Ascending aorta (tissue), 2 donors: ENCODE measurements at regions of chr12 and their contacts with region 1.

Region 1: DNA sequence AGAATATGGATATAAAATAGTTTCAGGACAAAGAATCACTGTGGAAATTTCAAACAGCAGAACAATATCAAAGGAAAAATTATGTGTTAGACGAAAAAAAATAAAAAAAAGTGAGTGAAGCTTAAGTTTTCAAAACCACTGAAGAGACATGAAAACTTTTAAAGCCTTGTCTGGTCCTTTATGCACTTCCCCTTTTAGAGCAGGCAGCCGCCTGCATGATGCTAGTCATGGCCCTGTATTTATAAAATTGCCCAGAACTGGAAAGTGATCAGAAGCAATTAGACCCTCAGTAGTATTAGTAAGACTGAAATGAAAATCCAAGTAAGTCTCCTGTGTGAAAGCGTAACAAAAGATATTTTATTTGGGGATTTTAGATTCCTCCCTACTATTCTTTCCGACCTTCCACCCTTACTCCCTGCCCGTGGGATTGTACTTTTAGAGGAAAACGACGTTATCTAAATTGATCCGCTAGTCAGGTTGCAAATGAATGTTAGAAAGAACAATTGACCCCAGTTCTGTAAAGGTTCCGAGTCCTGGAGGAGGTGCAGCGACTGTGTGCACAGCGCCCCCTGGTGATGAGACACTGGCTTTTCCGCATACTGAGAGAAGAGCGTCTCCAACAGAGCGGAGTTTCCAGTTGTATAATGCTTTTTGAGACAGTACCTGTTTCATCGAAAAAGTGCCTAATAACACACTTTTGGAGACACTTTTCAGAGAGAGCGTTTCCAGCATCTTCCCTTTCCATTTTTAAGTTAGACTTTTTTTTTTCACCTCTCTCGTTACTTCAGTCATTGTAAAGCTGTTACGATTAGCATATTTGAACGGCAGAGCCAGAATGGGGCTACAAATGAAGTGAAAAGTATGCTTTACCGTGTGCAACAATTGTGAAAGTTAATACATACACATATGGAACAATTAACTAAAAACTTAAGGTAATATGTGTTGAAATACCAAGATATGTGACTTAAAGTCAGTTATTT is 12.4 kb downstream of the MGST1 start:
- DNase-seq: no peak
- H3K4me3 ChIP-seq: no peak overlapping the region
- H3K27ac ChIP-seq: no peak overlapping the region
- H3K4me1 ChIP-seq: no peaks in the 10 kb centered on the region
- H3K27me3 ChIP-seq: no peaks in the 10 kb centered on the region
- CTCF ChIP-seq: peak in 2 of 3 experiments; percentile 9 to 32

Region 2: GRCh38 chr12:15979096-15980092 is 380.4 kb before region 1 on chr12:
- intact Hi-C with region 1: loop called (anchors 10 kb)
- DNase-seq: no peak
- H3K4me3 ChIP-seq: no peak overlapping the region
- H3K27ac ChIP-seq: peak overlapping the region; percentile 69 to 79
- H3K4me1 ChIP-seq: peaks cover 0 to 31% of the 10 kb centered on the region in 2 donors
- H3K27me3 ChIP-seq: no peaks in the 10 kb centered on the region
- CTCF ChIP-seq: peak; percentile 10 to 49 (median 39)

Region 3: GRCh38 chr12:16037533-16037932 is 322.3 kb before region 1 on chr12:
- intact Hi-C with region 1: no loop called
- DNase-seq: no peak
- H3K4me3 ChIP-seq: no peak overlapping the region
- H3K27ac ChIP-seq: no peak overlapping the region
- H3K4me1 ChIP-seq: no peaks in the 10 kb centered on the region
- H3K27me3 ChIP-seq: no peaks in the 10 kb centered on the region
- CTCF ChIP-seq: no peak

Region 4: GRCh38 chr12:16329578-16329977 is 30.2 kb before region 1 on chr12:
- intact Hi-C with region 1: loop called (anchors 1 kb)
- DNase-seq: no peak
- H3K4me3 ChIP-seq: no peak overlapping the region
- H3K27ac ChIP-seq: no peak overlapping the region
- H3K4me1 ChIP-seq: no peaks in the 10 kb centered on the region
- H3K27me3 ChIP-seq: no peaks in the 10 kb centered on the region
- CTCF ChIP-seq: no peak